Gastrocnemius medialis (tissue), 4 donors: ENCODE measurements at regions of chr15 and their contacts with region 1.

Region 1: DNA sequence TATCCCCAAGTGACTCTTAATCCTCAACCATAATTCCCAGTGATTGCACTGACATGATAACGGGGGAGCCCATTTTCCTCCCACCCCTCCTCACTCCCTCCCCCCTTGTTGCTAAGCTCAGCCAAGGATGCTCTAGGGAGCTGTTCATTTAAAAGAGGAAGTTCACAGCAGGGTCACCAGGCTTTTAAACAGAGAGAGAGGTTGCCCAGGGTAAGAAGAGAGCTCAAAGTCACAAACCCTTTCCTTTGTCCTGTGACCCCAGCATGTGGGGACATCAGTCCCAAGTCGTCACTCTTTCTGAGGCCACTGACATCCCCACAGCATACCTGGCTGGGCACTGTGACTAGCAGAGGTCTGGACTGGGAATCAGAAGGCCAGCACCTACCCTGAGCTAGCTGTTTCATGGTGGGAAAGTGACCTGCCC is 144.1 kb downstream of the RORA start:
- DNase-seq: no peak
- ATAC-seq: no peak
- H3K4me3 ChIP-seq: no peak overlapping the region
- H3K27ac ChIP-seq: peak overlapping the region in 2 of 4 donors; percentile 16 to 42
- H3K4me1 ChIP-seq: peaks cover 34 to 57% of the 10 kb centered on the region in 2 donors
- H3K27me3 ChIP-seq: no peaks in the 10 kb centered on the region
- CTCF ChIP-seq: no peak
- POLR2A ChIP-seq: no peak

Region 2: DNA sequence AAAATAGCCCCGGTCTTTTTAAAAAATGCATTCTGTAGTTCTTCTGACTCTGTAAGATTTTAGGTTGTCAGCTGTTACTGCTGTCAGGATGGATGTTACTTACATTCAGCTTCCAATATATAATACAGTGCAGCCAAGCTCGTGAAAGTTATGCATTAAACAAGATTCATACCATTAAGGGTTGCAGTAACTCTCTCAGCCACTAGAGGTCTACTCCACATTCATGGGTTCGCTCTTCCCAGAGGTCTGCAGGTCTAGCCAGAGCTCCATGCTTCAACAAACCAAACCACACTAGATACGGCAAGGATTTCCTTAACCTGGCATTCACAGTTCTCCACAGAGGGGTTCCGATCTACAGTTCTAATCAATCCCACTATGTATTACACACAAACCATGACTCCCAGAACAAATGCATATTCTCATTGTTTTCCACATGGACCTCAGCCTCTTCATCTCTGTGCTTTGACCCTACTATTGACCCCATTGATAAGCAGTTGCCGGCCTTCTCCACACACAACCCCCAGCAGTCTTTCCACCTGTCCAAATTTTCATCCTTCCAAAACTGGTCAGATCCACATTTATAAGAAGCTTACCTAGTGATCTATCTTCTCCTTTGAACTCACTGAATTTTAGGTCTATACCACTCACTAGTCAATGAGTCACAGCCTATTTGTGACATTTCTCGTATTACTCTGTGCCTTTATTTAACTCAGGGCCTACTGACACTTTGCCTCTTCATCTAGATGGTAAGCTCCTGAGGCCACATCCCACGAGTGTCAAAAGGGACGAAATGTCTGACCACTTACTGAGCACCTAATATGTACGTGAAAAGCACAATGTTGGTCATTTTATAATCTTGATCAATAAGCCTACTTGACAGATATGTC is 110.4 kb after region 1 on chr15:
- in situ Hi-C with region 1: no loop called
- intact Hi-C with region 1: loop called (anchors 5 kb)
- DNase-seq: no peak
- ATAC-seq: peak; percentile 73 to 85
- H3K4me3 ChIP-seq: no peak overlapping the region
- H3K27ac ChIP-seq: peak overlapping the region; percentile 78 to 86 (median 83)
- H3K4me1 ChIP-seq: peaks cover 73 to 79% of the 10 kb centered on the region in 2 donors
- H3K27me3 ChIP-seq: no peaks in the 10 kb centered on the region
- CTCF ChIP-seq: peak; percentile 59 to 82 (median 72)
- POLR2A ChIP-seq: peak in 1 of 2 donors; percentile 36